A673 (cell line): ENCODE measurements at regions of chr21 and their contacts with region 1.

Region 1: DNA sequence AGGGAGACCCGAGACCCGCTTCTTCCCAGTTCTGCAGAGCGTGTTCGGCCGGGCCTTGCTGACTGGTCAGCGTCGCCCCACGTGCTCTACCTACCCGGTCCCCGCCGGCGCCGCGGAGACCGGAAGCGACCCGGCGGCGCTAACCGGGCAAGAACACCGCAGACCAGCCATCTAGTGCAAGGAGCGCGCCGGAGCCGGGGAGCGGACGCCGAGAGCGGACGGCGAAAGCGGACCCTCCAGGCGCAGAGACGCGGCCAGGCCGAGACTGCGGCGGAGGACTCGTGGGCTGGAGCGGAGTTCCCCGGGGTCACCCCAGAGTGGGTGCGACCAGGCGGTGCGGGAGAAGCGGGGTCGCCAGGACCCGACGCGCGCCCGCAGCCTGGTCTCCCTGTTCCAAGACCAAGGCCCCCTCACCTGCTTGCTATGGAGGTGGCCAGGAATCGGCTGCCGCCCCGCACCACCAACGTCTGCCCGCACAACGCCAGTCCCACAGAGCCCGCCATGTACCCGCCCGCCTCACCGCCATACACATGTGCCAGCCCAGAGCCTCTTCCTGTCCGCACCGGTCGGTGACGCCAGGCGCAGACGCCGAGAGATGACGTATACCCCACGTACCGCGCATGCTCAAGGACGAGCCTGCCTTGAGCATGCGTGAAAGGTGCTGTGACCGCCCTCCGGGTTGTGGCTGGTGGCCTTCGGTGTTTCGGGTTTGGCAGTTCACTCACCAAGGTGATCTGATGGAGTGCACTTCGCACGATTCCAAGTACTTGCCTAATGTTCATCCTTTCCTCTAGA is at the start of gene WDR4:
- DNase-seq: peak; percentile 98
- H3K4me3 ChIP-seq: peak within 1 kb of the TSS; percentile 95
- H3K27ac ChIP-seq: peak within 1 kb of the TSS; percentile 87
- H3K4me1 ChIP-seq: no peaks in the 10 kb centered on the region
- H3K27me3 ChIP-seq: no peaks in the 10 kb centered on the region
- CTCF ChIP-seq: no peak
- total RNA-seq, gene WDR4: 54.2 and 55.3 TPM in 2 replicates

Region 2: DNA sequence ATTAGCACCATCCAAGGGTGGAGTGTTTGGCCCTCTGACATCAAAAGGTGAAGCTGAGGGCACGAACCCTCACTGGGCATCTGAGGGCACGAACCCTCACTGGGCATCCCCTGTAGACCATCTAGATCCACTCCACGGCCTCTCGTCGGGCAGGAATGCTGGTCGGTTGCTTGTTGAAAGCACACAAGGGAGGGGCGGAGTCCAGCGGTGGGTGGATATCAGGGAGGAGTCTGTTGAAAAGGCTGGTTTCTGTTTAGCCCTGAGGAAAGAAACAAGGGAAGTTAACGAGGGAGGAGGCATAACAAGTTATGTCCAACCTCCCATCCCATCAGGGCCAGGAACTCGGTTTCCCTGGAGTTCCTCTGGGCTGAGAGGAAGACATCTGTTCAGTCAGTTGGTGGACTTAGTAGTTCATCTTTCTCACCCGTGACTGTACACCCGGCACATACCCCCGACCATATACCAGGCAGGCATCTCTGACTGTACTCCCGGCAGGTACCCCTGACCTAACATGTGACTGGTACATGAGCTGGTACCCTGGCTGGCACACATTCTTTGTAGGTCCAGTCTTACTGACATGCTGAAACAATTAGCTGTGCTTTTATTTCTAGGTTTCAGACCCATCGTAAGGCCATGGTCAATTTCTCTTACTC is 257.9 kb before region 1 on chr21:
- CTCF ChIA-PET with region 1: no interaction called
- POLR2A ChIA-PET with region 1: no interaction called
- intact Hi-C with region 1: no loop called
- DNase-seq: no peak
- H3K4me3 ChIP-seq: no peak overlapping the region
- H3K27ac ChIP-seq: no peak overlapping the region
- H3K4me1 ChIP-seq: no peaks in the 10 kb centered on the region
- H3K27me3 ChIP-seq: no peaks in the 10 kb centered on the region
- CTCF ChIP-seq: no peak

Region 3: DNA sequence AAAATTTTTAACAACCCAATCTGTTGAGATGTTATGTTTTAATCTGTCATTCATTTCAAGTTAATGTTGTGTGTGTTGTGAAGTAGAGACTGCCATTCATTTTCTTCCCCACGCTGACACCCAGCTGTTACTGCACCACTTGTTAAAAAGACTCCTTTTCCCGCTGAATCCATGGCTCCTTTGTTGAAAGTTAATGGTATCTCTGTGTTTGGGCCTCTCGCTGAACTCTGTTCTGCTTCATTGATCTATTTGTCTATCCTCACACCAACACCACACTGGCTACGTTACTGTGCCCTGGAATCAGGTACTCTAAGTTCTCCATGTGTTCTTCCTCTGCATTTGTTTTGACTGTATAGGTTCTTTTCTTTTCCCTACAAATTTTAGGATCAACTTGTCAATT is 167.5 kb before region 1 on chr21:
- CTCF ChIA-PET with region 1: no interaction called
- POLR2A ChIA-PET with region 1: no interaction called
- intact Hi-C with region 1: no loop called
- DNase-seq: no peak
- H3K4me3 ChIP-seq: no peak overlapping the region
- H3K27ac ChIP-seq: no peak overlapping the region
- H3K4me1 ChIP-seq: no peaks in the 10 kb centered on the region
- H3K27me3 ChIP-seq: no peaks in the 10 kb centered on the region
- CTCF ChIP-seq: no peak

Region 4: GRCh38 chr21:42862774-42863503 is 16.3 kb before region 1 on chr21:
- CTCF ChIA-PET with region 1: no interaction called
- POLR2A ChIA-PET with region 1: no interaction called
- intact Hi-C with region 1: loop called (anchors 1 kb)
- DNase-seq: no peak
- H3K4me3 ChIP-seq: no peak overlapping the region
- H3K27ac ChIP-seq: no peak overlapping the region
- H3K4me1 ChIP-seq: peaks cover 11% of the 10 kb centered on the region
- H3K27me3 ChIP-seq: no peaks in the 10 kb centered on the region
- CTCF ChIP-seq: no peak

Region 5: DNA sequence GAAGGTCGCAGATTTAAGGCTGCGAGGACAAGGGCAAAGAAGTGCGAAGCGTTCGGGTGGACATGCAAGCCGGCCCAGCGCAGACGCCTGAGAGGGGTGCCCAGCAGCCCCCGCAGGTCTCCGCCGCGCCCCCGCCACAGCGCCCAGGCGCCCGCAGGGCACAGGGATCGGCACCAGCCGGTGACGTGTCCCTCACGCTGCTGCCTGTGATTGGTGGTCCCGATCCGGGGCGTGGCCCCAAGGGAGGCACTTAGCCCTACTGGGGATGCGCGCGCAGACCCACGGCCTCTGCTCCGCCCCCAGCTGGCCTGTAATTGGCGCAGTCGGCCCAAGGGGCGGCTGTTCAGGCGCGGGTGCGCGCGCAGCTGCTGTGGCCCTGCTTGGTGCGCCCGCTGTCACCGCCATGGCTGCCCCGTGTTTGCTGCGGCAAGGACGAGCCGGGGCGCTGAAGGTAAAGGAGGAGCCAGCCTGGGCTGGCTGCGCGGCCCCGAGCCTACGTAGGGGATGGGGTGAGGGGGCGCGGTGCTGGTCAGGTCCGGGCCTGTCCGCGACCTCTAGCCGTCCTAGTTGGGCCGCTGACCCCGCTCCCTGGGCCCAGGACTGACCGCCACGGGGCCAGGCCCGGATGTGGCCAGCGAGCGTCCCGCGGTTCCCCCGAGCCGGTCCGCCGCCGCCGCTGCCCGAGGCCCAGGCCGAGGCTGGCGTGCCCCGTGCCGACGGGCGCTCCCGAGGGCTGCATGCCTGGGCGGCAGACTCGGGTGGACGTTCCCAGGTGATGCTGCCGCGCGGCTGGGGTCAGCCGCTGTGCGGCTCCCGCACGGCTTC is 14.0 kb after region 1 on chr21 and contains the start of gene NDUFV3:
- CTCF ChIA-PET with region 1: no interaction called
- POLR2A ChIA-PET with region 1: no interaction called
- intact Hi-C with region 1: loop called (anchors 1 kb)
- DNase-seq: peak; percentile 99
- H3K4me3 ChIP-seq: peak within 1 kb of the TSS; percentile 90
- H3K27ac ChIP-seq: peak within 1 kb of the TSS; percentile 81
- H3K4me1 ChIP-seq: peaks cover 4% of the 10 kb centered on the region
- H3K27me3 ChIP-seq: no peaks in the 10 kb centered on the region
- CTCF ChIP-seq: no peak
- total RNA-seq, gene NDUFV3: 39.1 and 39.6 TPM in 2 replicates